H1 (cell line): ENCODE measurements at regions of chr2 and their contacts with region 1.

Region 1: GRCh38 chr2:179440642-179441251 is 176.1 kb upstream of the SESTD1 start:
- DNase-seq: no peak
- H3K4me3 ChIP-seq: no peak overlapping the region
- H3K27ac ChIP-seq: no peak overlapping the region
- H3K4me1 ChIP-seq: peaks cover 0 to 17% (median 7%) of the 10 kb centered on the region in 4 experiments; a peak in 6 of 7 replicates
- H3K27me3 ChIP-seq: no peaks in the 10 kb centered on the region
- CTCF ChIP-seq: peak in 2 of 3 experiments; percentile 35 to 58; a peak in 2 of 4 replicates
- EP300 ChIP-seq: no peak
- POLR2A ChIP-seq: no peak
- RAD21 ChIP-seq: peak; percentile 47

Region 2: GRCh38 chr2:179429597-179429996 is 11.2 kb before region 1 on chr2:
- CTCF ChIA-PET with region 1: interaction called, 21 read pairs
- POLR2A ChIA-PET with region 1: interaction called, 4 read pairs
- DNase-seq: no peak
- H3K4me3 ChIP-seq: no peak overlapping the region
- H3K27ac ChIP-seq: no peak overlapping the region
- H3K4me1 ChIP-seq: peaks cover 0 to 10% (median 1%) of the 10 kb centered on the region in 4 experiments; a peak in 3 of 7 replicates
- H3K27me3 ChIP-seq: no peaks in the 10 kb centered on the region
- CTCF ChIP-seq: no peak
- EP300 ChIP-seq: no peak
- POLR2A ChIP-seq: no peak
- RAD21 ChIP-seq: no peak

Region 3: GRCh38 chr2:179467111-179467510 is 26.4 kb after region 1 on chr2:
- CTCF ChIA-PET with region 1: interaction called, 12 read pairs
- POLR2A ChIA-PET with region 1: no interaction called
- DNase-seq: no peak
- H3K4me3 ChIP-seq: no peak overlapping the region
- H3K27ac ChIP-seq: no peak overlapping the region
- H3K4me1 ChIP-seq: peaks cover 0 to 11% (median 4%) of the 10 kb centered on the region in 4 experiments; a peak in 2 of 7 replicates
- H3K27me3 ChIP-seq: no peaks in the 10 kb centered on the region
- CTCF ChIP-seq: no peak
- EP300 ChIP-seq: no peak
- POLR2A ChIP-seq: no peak
- RAD21 ChIP-seq: no peak